ENCODE measurements at regions of chr7 and their contacts with region 1.

Region 1: DNA sequence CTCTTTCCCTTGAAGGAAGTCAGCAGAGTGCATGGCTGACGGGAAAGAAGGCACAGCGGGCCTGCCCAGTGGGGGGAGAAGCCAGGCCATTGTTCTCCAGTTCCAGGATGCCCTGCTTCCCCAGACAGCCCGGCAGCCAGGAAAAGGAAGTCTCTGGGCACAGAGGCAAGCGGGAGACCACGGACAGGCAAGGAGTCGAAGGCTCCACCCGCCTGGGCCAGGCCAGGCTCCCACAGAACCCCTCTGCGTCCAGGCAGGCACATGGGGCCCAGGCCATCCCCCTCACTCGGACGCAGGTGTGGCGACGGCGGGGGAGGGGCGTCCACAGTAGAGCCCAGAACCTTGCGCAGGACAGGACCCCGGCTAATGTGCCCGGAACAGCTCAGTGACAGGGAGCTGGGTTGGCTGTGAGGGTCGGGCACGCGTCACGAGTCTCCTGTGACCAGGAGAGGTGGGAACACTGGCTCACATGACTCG is 8.7 kb downstream of the GPR146 start:
- DNase-seq: peak in 1 of 2 experiments; percentile 71
- H3K4me3 ChIP-seq: peak overlapping the region in 1 of 4 experiments; percentile 14; a peak in 1 of 8 replicates
- H3K27ac ChIP-seq: peak overlapping the region; percentile 16
- H3K4me1 ChIP-seq: peaks cover 3 to 23% (median 12%) of the 10 kb centered on the region in 4 experiments
- H3K27me3 ChIP-seq: no peaks in the 10 kb centered on the region
- CTCF ChIP-seq: no peak
- EP300 ChIP-seq: no peak
- POLR2A ChIP-seq: no peak
- RAD21 ChIP-seq: no peak

Region 2: DNA sequence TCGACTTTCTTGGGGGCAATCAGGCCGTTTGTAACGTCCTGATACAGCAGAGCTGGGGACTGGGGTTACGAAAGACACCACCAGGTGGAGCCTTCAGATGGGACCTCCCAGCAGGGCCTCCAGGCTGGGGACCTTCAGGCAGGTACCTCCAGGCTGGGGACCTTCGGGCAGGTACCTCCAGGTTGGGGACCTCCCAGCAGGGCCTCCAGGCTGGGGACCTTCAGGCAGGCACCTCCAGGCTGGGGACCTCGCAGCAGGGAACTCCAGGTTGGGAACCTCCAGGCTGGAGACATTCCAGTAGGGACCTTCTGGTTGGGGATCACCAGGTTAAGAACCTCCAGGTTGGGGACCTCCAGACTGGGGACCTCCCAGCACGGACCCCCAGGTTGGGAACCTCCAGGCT is 32.2 kb before region 1 on chr7:
- CTCF ChIA-PET with region 1: interaction called, 15 read pairs
- POLR2A ChIA-PET with region 1: no interaction called
- DNase-seq: no peak
- H3K4me3 ChIP-seq: no peak overlapping the region
- H3K27ac ChIP-seq: no peak overlapping the region
- H3K4me1 ChIP-seq: no peaks in the 10 kb centered on the region
- H3K27me3 ChIP-seq: no peaks in the 10 kb centered on the region
- CTCF ChIP-seq: peak in 2 of 3 experiments; percentile 23 to 32; a peak in 3 of 4 replicates
- EP300 ChIP-seq: no peak
- POLR2A ChIP-seq: no peak
- RAD21 ChIP-seq: peak in 1 of 2 experiments; percentile 31; a peak in 1 of 4 replicates

Region 3: GRCh38 chr7:1103009-1103788 is 50.2 kb after region 1 on chr7:
- CTCF ChIA-PET with region 1: no interaction called
- POLR2A ChIA-PET with region 1: no interaction called
- DNase-seq: no peak
- H3K4me3 ChIP-seq: no peak overlapping the region
- H3K27ac ChIP-seq: no peak overlapping the region
- H3K4me1 ChIP-seq: no peaks in the 10 kb centered on the region
- H3K27me3 ChIP-seq: no peaks in the 10 kb centered on the region
- CTCF ChIP-seq: no peak
- EP300 ChIP-seq: no peak
- POLR2A ChIP-seq: no peak
- RAD21 ChIP-seq: no peak